Aorta (tissue), 5 donors: ENCODE measurements at regions of chr15 and their contacts with region 1.

Region 1: GRCh38 chr15:73051811-73052678 is at the start of gene NEO1:
- DNase-seq: peak; percentile 90 to 94
- ATAC-seq: peak; percentile 95
- H3K4me3 ChIP-seq: peak within 1 kb of the TSS; percentile 84 to 93
- H3K27ac ChIP-seq: peak within 1 kb of the TSS; percentile 54 to 89
- H3K4me1 ChIP-seq: peaks cover 7 to 8% of the 10 kb centered on the region in 2 donors
- H3K27me3 ChIP-seq: no peaks in the 10 kb centered on the region
- total RNA-seq, gene NEO1: 31.4 to 46.7 TPM

Region 2: DNA sequence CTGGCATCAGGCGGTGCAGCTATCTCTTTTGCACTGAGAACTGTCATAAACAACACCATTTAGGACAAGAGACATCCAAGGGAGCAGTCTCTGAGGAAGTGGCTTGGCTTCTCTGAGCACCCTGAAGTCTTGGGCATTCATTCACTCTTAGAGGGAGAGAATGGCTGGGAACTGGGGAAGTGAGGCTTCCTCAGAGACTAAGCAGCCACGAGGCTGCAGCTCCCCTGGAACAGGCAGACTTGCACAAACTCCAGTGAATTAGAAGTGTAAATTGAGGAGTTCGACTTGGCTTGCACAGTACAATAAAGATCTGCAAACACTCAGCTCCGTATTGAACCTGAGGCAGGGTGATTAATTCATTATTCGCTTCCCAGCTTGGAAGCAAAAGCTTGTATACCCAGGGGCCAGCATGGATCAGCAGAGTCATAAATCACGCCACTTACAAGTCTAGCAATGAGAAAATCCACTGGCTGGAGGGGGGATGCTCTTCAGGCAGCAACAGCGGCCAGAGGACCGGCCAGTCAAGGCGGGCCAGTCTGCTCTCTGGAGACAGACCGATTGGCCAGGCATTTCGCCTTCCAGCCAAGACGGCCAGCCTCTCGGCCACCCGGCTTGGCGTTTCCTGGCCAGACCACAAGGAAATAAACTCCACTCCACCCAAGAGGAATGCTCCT is 149.7 kb before region 1 on chr15:
- intact Hi-C with region 1: loop called in 1 of 2 experiments (anchors 5 kb)
- DNase-seq: peak; percentile 89 to 91
- ATAC-seq: peak; percentile 94
- H3K4me3 ChIP-seq: no peak overlapping the region
- H3K27ac ChIP-seq: peak overlapping the region in 1 of 2 donors; percentile 96
- H3K4me1 ChIP-seq: peaks cover 0 to 3% of the 10 kb centered on the region in 2 donors
- H3K27me3 ChIP-seq: no peaks in the 10 kb centered on the region

Region 3: GRCh38 chr15:72994534-72995177 is 57.4 kb before region 1 on chr15:
- intact Hi-C with region 1: loop called in 1 of 2 experiments (anchors 5 kb)
- DNase-seq: peak in 1 of 2 donors; percentile 53
- ATAC-seq: peak; percentile 42
- H3K4me3 ChIP-seq: no peak overlapping the region
- H3K27ac ChIP-seq: peak overlapping the region; percentile 11 to 53
- H3K4me1 ChIP-seq: peaks cover 2 to 11% of the 10 kb centered on the region in 2 donors
- H3K27me3 ChIP-seq: no peaks in the 10 kb centered on the region

Region 4: GRCh38 chr15:73005446-73005845 is 46.6 kb before region 1 on chr15:
- intact Hi-C with region 1: no loop called
- DNase-seq: no peak
- ATAC-seq: no peak
- H3K4me3 ChIP-seq: no peak overlapping the region
- H3K27ac ChIP-seq: no peak overlapping the region
- H3K4me1 ChIP-seq: no peaks in the 10 kb centered on the region
- H3K27me3 ChIP-seq: no peaks in the 10 kb centered on the region

Region 5: GRCh38 chr15:73142802-73143762 is 91.0 kb after region 1 on chr15:
- intact Hi-C with region 1: no loop called
- DNase-seq: no peak
- ATAC-seq: no peak
- H3K4me3 ChIP-seq: no peak overlapping the region
- H3K27ac ChIP-seq: no peak overlapping the region
- H3K4me1 ChIP-seq: peaks cover 0 to 4% of the 10 kb centered on the region in 2 donors
- H3K27me3 ChIP-seq: no peaks in the 10 kb centered on the region